GM12878 (cell line): ENCODE measurements at regions of chr6 and their contacts with region 1.

Region 1: DNA sequence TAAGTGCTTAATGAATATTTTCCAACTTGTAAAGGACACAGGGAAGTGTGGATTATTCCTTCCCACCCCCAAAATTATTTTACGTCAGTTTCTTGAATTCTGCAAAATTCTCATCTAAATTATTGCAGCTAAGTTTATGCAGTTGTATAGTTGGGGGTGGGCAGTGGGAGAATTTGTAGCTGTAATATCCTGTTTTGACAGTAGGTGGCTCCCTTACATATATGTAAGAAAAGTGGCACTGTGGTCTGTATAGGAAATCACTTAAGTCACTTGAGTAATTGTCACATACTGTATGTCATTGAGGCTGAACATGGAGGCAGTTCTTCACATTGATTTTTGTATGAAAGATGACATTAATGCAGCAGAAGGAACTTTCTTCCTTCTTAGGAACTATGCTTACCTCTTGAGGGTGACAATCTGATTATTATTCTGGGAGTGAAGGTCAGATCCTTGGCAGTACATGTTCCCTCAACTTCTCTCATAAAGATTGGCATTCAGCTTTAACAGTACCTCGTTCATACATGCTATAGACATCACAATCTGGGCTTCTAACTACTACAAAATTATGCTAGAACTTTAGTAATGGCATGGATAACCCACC is 14.7 kb upstream of the CFAP206 start:
- DNase-seq: no peak
- ATAC-seq: peak; percentile 84
- H3K4me3 ChIP-seq: no peak overlapping the region
- H3K27ac ChIP-seq: no peak overlapping the region
- H3K4me1 ChIP-seq: no peaks in the 10 kb centered on the region
- H3K27me3 ChIP-seq: no peaks in the 10 kb centered on the region
- CTCF ChIP-seq: peak; percentile 55 to 63 (median 58); a peak in 5 of 6 replicates
- EP300 ChIP-seq: no peak
- POLR2A ChIP-seq: no peak
- RAD21 ChIP-seq: peak; percentile 78

Region 2: GRCh38 chr6:87078983-87079616 is 314.0 kb before region 1 on chr6:
- CTCF ChIA-PET with region 1: interaction called, 10 read pairs
- POLR2A ChIA-PET with region 1: no interaction called
- RAD21 ChIA-PET with region 1: no interaction called
- SMC1A ChIA-PET with region 1: interaction called, 4 read pairs
- in situ Hi-C with region 1: no loop called
- intact Hi-C with region 1: no loop called
- DNase-seq: no peak
- ATAC-seq: peak; percentile 96
- H3K4me3 ChIP-seq: no peak overlapping the region
- H3K27ac ChIP-seq: no peak overlapping the region
- H3K4me1 ChIP-seq: peaks cover 7% of the 10 kb centered on the region
- H3K27me3 ChIP-seq: no peaks in the 10 kb centered on the region
- CTCF ChIP-seq: peak; percentile 74 to 99 (median 95)
- EP300 ChIP-seq: no peak
- POLR2A ChIP-seq: no peak
- RAD21 ChIP-seq: peak; percentile 62

Region 3: DNA sequence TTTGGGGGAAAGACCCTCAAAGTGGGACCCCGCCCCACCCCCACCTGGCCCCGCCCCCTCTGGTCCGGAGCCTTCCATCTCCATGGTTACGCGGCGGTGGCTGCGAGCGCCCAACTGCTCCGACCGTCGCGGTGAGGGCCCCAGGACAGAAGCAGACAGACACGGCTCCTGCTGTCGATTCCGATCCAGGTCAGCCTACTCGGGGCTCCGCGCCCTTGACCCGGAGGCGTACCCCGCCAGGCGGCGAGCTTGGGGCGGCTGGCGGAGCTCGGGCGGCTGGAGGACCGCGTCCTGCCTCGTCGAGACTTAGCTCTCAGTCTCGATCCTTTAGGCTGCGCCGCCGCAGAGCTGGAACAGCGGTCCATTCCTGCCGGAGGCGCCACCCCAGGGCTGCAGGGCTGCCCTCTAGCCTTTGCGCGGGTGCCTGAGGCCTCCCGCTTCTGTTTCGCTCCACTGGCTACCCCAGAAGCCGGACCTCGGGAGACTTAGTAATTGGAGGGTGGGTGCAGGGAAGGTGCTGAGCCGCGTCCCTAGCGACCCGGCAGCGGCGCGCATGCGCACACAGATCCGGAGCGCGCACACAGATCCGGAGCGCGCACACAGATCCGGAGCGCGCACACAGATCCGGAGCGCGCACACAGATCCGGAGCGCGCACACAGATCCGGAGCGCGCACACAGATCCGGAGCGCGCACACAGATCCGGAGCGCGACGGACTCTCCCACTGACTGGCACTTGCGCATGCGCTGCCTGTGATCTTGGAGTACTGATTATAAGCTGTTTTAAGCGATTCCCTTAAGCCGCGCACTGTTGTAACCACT is 15.0 kb after region 1 on chr6 and contains the start of gene CFAP206:
- CTCF ChIA-PET with region 1: interaction called, 33 read pairs
- POLR2A ChIA-PET with region 1: interaction called, 3 read pairs
- RAD21 ChIA-PET with region 1: interaction called, 7 read pairs
- SMC1A ChIA-PET with region 1: interaction called, 12 read pairs
- in situ Hi-C with region 1: no loop called
- intact Hi-C with region 1: no loop called
- DNase-seq: peak; percentile 40
- ATAC-seq: peak; percentile 93
- H3K4me3 ChIP-seq: peak within 1 kb of the TSS; percentile 79
- H3K27ac ChIP-seq: no peak within 1 kb of the TSS
- H3K4me1 ChIP-seq: no peaks in the 10 kb centered on the region
- H3K27me3 ChIP-seq: no peaks in the 10 kb centered on the region; a peak in 1 of 4 replicates
- CTCF ChIP-seq: peak in 2 of 3 experiments; percentile 6 to 24; a peak in 1 of 6 replicates
- EP300 ChIP-seq: no peak
- POLR2A ChIP-seq: no peak
- RAD21 ChIP-seq: no peak
- polyA plus RNA-seq, gene CFAP206: not detected

Region 4: DNA sequence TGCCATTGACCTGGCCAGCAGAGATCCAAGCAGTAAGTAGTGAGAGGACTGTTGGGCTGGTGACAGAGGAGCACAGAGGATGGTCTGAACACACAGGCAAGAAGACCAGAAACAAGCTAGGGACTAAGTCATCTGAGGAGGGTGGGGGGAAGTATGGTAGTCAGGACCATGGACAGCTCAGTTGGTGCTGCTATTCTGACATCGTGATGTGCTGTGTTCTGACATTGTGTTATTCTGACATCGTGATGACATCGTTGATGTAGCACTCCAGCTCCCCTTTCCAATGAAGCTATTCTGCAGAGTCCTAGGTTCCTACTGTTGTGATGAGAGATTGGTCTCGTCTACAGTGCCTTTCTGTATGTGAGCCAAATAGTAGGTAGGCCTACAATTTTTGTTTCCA is 43.3 kb after region 1 on chr6:
- CTCF ChIA-PET with region 1: no interaction called
- POLR2A ChIA-PET with region 1: no interaction called
- RAD21 ChIA-PET with region 1: no interaction called
- SMC1A ChIA-PET with region 1: no interaction called
- in situ Hi-C with region 1: no loop called
- intact Hi-C with region 1: no loop called
- DNase-seq: peak; percentile 25
- ATAC-seq: peak; percentile 76
- H3K4me3 ChIP-seq: no peak overlapping the region
- H3K27ac ChIP-seq: no peak overlapping the region
- H3K4me1 ChIP-seq: no peaks in the 10 kb centered on the region
- H3K27me3 ChIP-seq: no peaks in the 10 kb centered on the region
- CTCF ChIP-seq: no peak
- EP300 ChIP-seq: no peak
- POLR2A ChIP-seq: no peak
- RAD21 ChIP-seq: no peak

Region 5: DNA sequence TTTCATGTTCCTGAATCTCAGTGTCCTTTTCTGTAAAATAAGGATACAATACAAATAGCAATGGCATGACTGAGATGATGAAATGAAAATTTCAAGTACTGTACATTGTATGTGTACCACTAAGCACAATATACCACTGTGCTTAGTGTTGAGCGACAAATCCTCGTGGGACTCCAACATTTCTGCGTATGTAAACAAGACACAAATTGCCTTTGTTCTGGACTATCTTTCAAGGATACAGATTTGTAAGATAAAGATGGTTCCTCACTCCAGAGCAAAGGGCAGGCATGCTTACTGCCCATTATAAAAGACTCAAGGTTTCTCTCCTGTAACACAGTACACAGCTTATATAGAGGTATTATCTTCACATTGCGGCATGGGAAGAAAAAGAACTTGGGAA is 190.7 kb after region 1 on chr6:
- CTCF ChIA-PET with region 1: no interaction called
- POLR2A ChIA-PET with region 1: no interaction called
- RAD21 ChIA-PET with region 1: no interaction called
- SMC1A ChIA-PET with region 1: no interaction called
- in situ Hi-C with region 1: no loop called
- intact Hi-C with region 1: no loop called
- DNase-seq: no peak
- ATAC-seq: no peak
- H3K4me3 ChIP-seq: no peak overlapping the region
- H3K27ac ChIP-seq: no peak overlapping the region
- H3K4me1 ChIP-seq: peaks cover 3% of the 10 kb centered on the region; the same call in 1 of the 2 replicates
- H3K27me3 ChIP-seq: no peaks in the 10 kb centered on the region
- CTCF ChIP-seq: no peak
- EP300 ChIP-seq: no peak
- POLR2A ChIP-seq: no peak
- RAD21 ChIP-seq: no peak

Region 6: GRCh38 chr6:87808005-87808757 is 415.1 kb after region 1 on chr6:
- CTCF ChIA-PET with region 1: no interaction called
- POLR2A ChIA-PET with region 1: no interaction called
- RAD21 ChIA-PET with region 1: no interaction called
- SMC1A ChIA-PET with region 1: interaction called, 3 read pairs
- in situ Hi-C with region 1: no loop called
- intact Hi-C with region 1: loop called (anchors 5 kb)
- DNase-seq: no peak
- ATAC-seq: peak; percentile 45
- H3K4me3 ChIP-seq: no peak overlapping the region
- H3K27ac ChIP-seq: peak overlapping the region; percentile 43
- H3K4me1 ChIP-seq: peaks cover 27% of the 10 kb centered on the region
- H3K27me3 ChIP-seq: no peaks in the 10 kb centered on the region
- CTCF ChIP-seq: no peak
- EP300 ChIP-seq: no peak
- POLR2A ChIP-seq: no peak
- RAD21 ChIP-seq: no peak

Region 7: DNA sequence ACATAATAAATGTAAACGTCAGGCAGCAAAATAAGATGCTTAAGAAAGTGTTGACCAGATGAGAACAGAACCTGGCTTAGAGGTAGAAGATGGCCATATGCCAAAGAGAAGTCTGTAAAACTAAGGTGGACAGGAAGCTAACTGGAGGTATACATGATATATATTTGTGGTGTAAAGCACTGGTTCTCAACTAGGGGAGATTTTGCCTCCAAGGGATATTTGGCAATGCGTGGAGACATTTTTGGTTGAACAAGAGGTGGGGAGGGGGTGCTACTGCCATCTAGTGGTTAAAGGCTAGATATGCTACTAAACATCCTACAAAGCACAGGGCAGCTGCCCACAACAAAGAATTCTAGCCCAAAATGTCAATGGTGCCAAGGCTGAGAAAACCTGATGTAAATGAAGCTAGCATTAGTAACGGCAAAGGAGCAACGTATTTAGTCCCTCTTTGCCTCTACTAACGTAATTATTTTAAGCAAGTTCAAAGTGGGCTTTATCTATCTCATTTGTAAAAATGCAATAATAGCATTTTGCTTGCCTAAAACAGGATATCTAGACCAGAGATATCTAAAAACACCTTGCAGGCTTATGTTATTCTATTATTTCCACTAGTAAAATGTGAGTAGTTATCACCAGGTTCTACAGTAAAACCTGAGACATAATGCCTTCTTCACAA is 1387.7 kb after region 1 on chr6:
- CTCF ChIA-PET with region 1: interaction called, 4 read pairs
- POLR2A ChIA-PET with region 1: no interaction called
- RAD21 ChIA-PET with region 1: interaction called, 4 read pairs
- SMC1A ChIA-PET with region 1: no interaction called
- in situ Hi-C with region 1: no loop called
- intact Hi-C with region 1: loop called (anchors 5 kb)
- DNase-seq: peak; percentile 63
- ATAC-seq: peak; percentile 90
- H3K4me3 ChIP-seq: no peak overlapping the region
- H3K27ac ChIP-seq: no peak overlapping the region
- H3K4me1 ChIP-seq: no peaks in the 10 kb centered on the region
- H3K27me3 ChIP-seq: no peaks in the 10 kb centered on the region
- CTCF ChIP-seq: peak; percentile 60 to 68 (median 67); a peak in 5 of 6 replicates
- EP300 ChIP-seq: no peak
- POLR2A ChIP-seq: no peak
- RAD21 ChIP-seq: peak; percentile 88